GM10248 (cell line): ENCODE measurements at regions of chr12 and their contacts with region 1.

Region 1: DNA sequence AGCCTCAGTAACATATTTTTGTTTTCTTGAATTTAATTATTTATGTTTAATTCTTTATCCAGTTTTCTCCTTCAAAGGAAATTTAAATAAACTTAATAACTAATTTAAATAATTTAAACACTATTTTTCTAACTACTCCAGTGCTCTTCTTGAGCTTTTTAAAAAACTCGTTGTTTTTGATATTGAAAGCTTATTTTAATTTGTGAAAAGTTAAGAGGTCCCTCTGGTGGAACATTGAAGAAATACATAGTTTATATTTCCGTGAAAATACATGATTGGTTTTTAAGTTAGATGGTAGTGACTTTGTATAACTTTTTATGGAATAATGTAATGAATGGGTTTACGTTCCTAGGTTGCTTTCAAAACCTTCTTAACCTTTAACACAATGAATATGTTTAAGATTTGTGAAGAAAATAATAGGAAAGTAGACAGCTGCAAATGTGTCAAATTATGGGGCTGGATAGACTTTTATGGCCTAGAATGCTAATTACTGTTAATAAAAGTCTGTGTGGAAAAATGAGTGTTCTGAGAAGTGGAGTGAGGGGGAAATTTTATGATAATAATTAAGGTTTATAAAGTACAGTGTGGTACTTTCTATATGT is 45.9 kb upstream of the MSRB3 start:
- DNase-seq: peak; percentile 14
- CTCF ChIP-seq: peak; percentile 12

Region 2: DNA sequence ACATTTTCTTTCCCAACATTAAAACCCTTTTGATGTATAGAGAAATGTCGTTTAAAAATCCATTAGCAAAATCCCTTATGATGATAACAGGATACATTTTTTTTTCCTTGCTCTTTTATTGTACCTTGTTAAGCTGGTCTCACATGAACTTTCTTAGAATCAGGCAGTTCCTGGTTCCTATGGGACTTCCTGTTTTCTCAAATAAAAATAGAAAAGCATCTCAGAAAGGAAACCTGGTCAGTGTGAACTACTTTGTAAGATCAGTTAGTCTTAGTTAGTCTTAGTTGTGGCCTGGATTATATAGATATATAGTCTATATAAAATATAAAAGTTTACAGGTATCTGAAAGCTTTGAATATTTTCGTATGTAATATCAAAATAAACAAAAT is 22.9 kb before region 1 on chr12:
- CTCF ChIA-PET with region 1: interaction called, 20 read pairs
- POLR2A ChIA-PET with region 1: no interaction called
- DNase-seq: peak; percentile 16
- CTCF ChIP-seq: no peak

Region 3: GRCh38 chr12:65217086-65217485 is 15.5 kb before region 1 on chr12:
- CTCF ChIA-PET with region 1: interaction called, 20 read pairs
- POLR2A ChIA-PET with region 1: interaction called, 4 read pairs
- DNase-seq: no peak
- CTCF ChIP-seq: no peak